ENCODE measurements at regions of chr19 and their contacts with region 1.

Region 1: GRCh38 chr19:53881482-53882390 is at the start of gene PRKCG:
- DNase-seq: peak; percentile 70
- ATAC-seq: peak; percentile 60
- H3K4me3 Mint-ChIP-seq: no peak within 1 kb of the TSS
- H3K27ac Mint-ChIP-seq: no peak within 1 kb of the TSS
- H3K4me1 Mint-ChIP-seq: peaks cover 28% of the 10 kb centered on the region
- H3K27me3 Mint-ChIP-seq: peaks cover 14% of the 10 kb centered on the region
- CTCF ChIP-seq: peak; percentile 60
- total RNA-seq, gene PRKCG: 0.11 TPM in 1 of 2 experiments, not detected in the other

Region 2: GRCh38 chr19:53867225-53868090 is 14.3 kb before region 1 on chr19 and contains the start of gene MYADM:
- CTCF ChIA-PET with region 1: interaction called, 14 read pairs
- POLR2A ChIA-PET with region 1: interaction called, 18 read pairs
- intact Hi-C with region 1: no loop called
- DNase-seq: peak; percentile 100
- ATAC-seq: peak; percentile 74
- H3K4me3 Mint-ChIP-seq: peak within 1 kb of the TSS; percentile 92
- H3K27ac Mint-ChIP-seq: peak within 1 kb of the TSS; percentile 91
- H3K4me1 Mint-ChIP-seq: peaks cover 25% of the 10 kb centered on the region
- H3K27me3 Mint-ChIP-seq: no peaks in the 10 kb centered on the region
- CTCF ChIP-seq: no peak
- total RNA-seq, gene MYADM: 64.7 to 69.9 TPM

Region 3: GRCh38 chr19:53915000-53915399 is 33.3 kb after region 1 on chr19:
- CTCF ChIA-PET with region 1: no interaction called
- POLR2A ChIA-PET with region 1: no interaction called
- intact Hi-C with region 1: no loop called
- DNase-seq: no peak
- ATAC-seq: no peak
- H3K4me3 Mint-ChIP-seq: no peak overlapping the region
- H3K27ac Mint-ChIP-seq: no peak overlapping the region
- H3K4me1 Mint-ChIP-seq: no peaks in the 10 kb centered on the region
- H3K27me3 Mint-ChIP-seq: peaks cover 28% of the 10 kb centered on the region
- CTCF ChIP-seq: no peak

Measured in activated CD8-positive, alpha-beta T cell treated with anti-CD3 and anti-CD28 coated beads for 36 hours (primary cell).